K562 (cell line): ENCODE measurements at regions of chr11 and their contacts with region 1.

Region 1: GRCh38 chr11:74929431-74930363 is 19.2 kb downstream of the XRRA1 start:
- DNase-seq: peak; percentile 45 to 92 (median 54)
- ATAC-seq: peak; percentile 98
- H3K4me3 ChIP-seq: no peak overlapping the region
- H3K27ac ChIP-seq: no peak overlapping the region
- H3K4me1 ChIP-seq: no peaks in the 10 kb centered on the region; a peak in 1 of 5 replicates
- H3K27me3 ChIP-seq: no peaks in the 10 kb centered on the region
- CTCF ChIP-seq: peak; percentile 82 to 92 (median 88)
- EP300 ChIP-seq: no peak
- POLR2A ChIP-seq: no peak
- RAD21 ChIP-seq: peak; percentile 91 to 93

Region 2: DNA sequence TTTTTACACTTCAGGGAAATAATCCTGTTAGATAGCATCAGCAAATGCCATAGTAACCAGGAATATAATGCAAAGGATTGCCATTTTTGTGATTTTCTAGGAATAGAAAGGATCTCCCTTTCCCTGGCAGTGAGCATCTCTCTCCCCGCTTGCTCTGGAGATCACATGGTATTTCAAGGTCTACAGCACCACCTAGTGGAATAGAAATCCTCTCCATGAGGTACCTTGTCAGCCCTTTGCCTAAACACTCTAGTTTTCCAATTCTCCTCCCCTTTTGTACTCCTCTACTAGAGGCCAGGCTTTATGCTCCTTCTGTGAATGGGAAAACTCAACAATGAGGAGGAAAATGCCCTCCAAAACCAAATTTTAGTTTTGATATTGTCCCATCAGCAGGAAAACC is 59.2 kb before region 1 on chr11:
- CTCF ChIA-PET with region 1: no interaction called
- POLR2A ChIA-PET with region 1: no interaction called
- in situ Hi-C with region 1: no loop called
- intact Hi-C with region 1: no loop called
- DNase-seq: peak; percentile 31 to 59 (median 46)
- ATAC-seq: peak; percentile 82
- H3K4me3 ChIP-seq: no peak overlapping the region
- H3K27ac ChIP-seq: no peak overlapping the region
- H3K4me1 ChIP-seq: no peaks in the 10 kb centered on the region
- H3K27me3 ChIP-seq: no peaks in the 10 kb centered on the region
- CTCF ChIP-seq: peak; percentile 39 to 54 (median 47); a peak in 4 of 6 replicates
- EP300 ChIP-seq: no peak
- POLR2A ChIP-seq: no peak
- RAD21 ChIP-seq: peak in 1 of 2 experiments; percentile 54; a peak in 2 of 4 replicates

Region 3: GRCh38 chr11:75004215-75004614 is 74.5 kb after region 1 on chr11:
- CTCF ChIA-PET with region 1: no interaction called
- POLR2A ChIA-PET with region 1: no interaction called
- in situ Hi-C with region 1: no loop called
- intact Hi-C with region 1: no loop called
- DNase-seq: no peak
- ATAC-seq: no peak
- H3K4me3 ChIP-seq: no peak overlapping the region
- H3K27ac ChIP-seq: no peak overlapping the region
- H3K4me1 ChIP-seq: no peaks in the 10 kb centered on the region
- H3K27me3 ChIP-seq: no peaks in the 10 kb centered on the region
- CTCF ChIP-seq: no peak
- EP300 ChIP-seq: no peak
- POLR2A ChIP-seq: no peak
- RAD21 ChIP-seq: no peak

Region 4: DNA sequence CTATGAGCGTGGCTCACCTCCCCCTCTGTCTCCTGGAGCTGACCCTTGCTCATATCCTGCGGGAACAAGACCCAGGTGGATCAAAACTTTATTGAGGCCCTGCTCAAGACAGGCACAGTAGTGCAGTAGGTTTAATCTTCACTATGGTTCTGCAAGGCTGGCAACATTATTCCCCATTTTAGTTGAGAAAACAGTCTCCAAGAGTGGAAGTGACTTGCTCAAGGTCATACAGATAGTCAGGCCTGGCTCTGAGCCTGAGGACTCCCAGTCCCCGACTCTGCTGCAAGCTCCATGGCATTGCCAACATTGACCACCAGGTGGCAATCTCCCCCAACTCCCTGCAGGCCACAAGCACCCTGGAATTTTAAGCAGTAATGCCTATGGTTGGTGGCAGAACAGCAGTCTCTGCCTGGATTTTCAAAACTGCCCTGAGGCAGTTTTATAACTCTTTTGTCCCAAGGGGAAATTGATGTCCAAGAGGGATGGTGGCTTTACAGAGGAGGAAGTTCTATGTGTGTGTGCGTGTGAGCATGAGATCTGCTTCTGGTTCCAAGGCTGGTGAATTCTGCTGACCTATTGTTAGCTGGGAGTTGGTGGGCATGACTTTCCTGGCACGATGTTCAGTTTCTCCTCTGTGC is 93.2 kb after region 1 on chr11:
- CTCF ChIA-PET with region 1: interaction called, 7 read pairs
- POLR2A ChIA-PET with region 1: no interaction called
- in situ Hi-C with region 1: no loop called
- intact Hi-C with region 1: loop called (anchors 2 kb)
- DNase-seq: peak; percentile 85 to 92 (median 89)
- ATAC-seq: peak; percentile 99
- H3K4me3 ChIP-seq: no peak overlapping the region
- H3K27ac ChIP-seq: peak overlapping the region; percentile 13; the same call in 1 of the 3 replicates
- H3K4me1 ChIP-seq: peaks cover 6 to 18% of the 10 kb centered on the region in 2 experiments; a peak in 4 of 5 replicates
- H3K27me3 ChIP-seq: no peaks in the 10 kb centered on the region
- CTCF ChIP-seq: peak; percentile 97 to 99 (median 99)
- EP300 ChIP-seq: peak; percentile 46
- POLR2A ChIP-seq: no peak
- RAD21 ChIP-seq: peak; percentile 98 to 99

Region 5: DNA sequence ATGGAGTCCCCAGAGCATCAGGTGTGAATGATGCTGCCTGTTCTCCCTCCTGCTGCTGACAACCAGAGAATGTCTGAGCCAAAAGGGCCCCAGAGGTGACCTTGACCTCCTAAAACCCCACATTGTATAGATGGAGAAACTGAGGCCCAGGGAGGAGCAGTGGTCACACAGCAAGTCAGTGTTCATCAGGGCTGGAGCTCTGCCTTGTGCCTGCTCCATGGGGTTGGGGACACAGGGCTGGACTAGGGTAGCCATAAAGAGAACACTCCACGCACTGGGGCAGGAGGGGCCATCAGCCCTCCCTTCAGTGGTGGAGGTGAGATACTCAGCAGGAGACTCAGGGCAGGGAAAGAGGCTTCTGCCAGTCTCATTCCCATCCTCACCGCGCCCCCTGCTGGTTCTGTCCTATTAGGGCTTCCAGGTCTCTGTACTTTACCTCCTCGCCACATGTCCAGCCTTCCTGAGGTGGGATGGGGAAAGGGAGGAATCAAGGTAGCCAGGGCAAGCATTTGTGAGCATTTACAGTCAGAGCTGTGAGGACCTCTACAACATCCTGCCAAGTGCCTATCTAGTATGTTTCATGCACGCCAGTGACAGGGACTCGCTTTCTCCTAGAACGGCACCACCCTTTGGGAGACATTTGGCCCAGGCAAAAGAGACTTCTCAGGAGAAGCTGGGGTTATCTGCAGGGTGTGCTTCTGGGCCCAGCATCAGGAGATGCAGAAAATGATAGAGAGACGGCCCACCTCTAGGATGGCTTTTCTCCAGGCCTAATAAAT is 102.3 kb after region 1 on chr11:
- CTCF ChIA-PET with region 1: interaction called, 6 read pairs
- POLR2A ChIA-PET with region 1: interaction called, 3 read pairs
- in situ Hi-C with region 1: no loop called
- intact Hi-C with region 1: loop called (anchors 2 kb)
- DNase-seq: peak; percentile 76 to 91 (median 80)
- ATAC-seq: peak; percentile 82
- H3K4me3 ChIP-seq: no peak overlapping the region
- H3K27ac ChIP-seq: peak overlapping the region; percentile 75
- H3K4me1 ChIP-seq: peaks cover 29 to 51% of the 10 kb centered on the region in 2 experiments
- H3K27me3 ChIP-seq: no peaks in the 10 kb centered on the region
- CTCF ChIP-seq: peak; percentile 79 to 87 (median 80)
- EP300 ChIP-seq: no peak
- POLR2A ChIP-seq: no peak
- RAD21 ChIP-seq: peak in 1 of 2 experiments; percentile 83; a peak in 3 of 4 replicates

Region 6: GRCh38 chr11:75142714-75143419 is 213.2 kb after region 1 on chr11:
- CTCF ChIA-PET with region 1: no interaction called
- POLR2A ChIA-PET with region 1: interaction called, 3 read pairs
- in situ Hi-C with region 1: no loop called
- intact Hi-C with region 1: loop called (anchors 5 kb)
- DNase-seq: peak; percentile 84 to 91 (median 88)
- ATAC-seq: peak; percentile 86
- H3K4me3 ChIP-seq: no peak overlapping the region
- H3K27ac ChIP-seq: peak overlapping the region; percentile 33; the same call in 1 of the 3 replicates
- H3K4me1 ChIP-seq: peaks cover 22 to 32% of the 10 kb centered on the region in 2 experiments
- H3K27me3 ChIP-seq: no peaks in the 10 kb centered on the region
- CTCF ChIP-seq: 0 out of 6 replicates have a peak, but pooled peaks of 1 of the 3 experiments have one; percentile 2
- EP300 ChIP-seq: 0 out of 2 replicates have a peak, but pooled peaks have one; percentile 23
- POLR2A ChIP-seq: no peak
- RAD21 ChIP-seq: no peak

Region 7: DNA sequence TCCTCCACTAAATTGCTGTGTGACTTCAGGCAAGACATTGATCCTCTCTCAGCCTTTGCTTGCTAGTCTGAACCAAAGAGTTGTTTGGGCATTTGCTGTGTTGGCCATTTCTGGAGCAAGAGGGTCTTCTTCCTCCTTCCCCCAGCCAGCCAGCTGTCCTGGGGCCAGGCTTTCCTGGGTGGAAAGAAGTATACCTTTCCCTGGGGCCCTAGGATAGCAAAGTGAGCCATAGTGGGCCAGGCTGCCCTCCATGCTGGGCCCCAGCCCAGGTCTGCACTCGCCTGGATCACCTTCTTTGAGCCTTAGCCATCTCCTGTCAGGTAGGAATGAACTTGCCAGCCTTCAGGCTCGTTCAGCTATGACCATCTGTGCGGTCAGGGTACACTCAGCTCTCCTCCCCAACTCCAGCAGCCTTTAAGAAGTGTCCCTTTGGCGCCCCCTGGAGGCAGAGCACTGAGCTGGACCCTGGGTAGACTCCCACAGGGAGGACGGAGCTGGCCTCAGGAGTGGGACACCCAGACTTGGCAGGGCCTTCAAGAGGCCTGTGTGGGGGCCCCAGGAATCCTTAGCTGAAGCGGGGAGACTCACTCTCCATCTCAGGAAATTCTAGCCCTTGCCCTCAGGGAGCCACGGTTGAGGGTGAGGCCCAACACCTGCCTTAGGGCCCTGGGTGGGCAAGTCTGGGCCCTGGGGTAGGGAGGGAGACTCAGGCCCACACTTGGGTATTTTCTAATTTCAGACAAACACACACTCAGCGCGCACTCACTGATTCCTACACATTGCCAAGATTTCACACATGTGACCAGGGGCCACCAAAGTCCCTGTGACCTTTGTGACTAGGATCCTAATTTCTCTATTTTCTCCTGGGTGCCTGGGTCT is 275.2 kb after region 1 on chr11:
- CTCF ChIA-PET with region 1: interaction called, 5 read pairs
- POLR2A ChIA-PET with region 1: no interaction called
- in situ Hi-C with region 1: no loop called
- intact Hi-C with region 1: loop called (anchors 1 kb)
- DNase-seq: peak; percentile 87 to 92 (median 90)
- ATAC-seq: peak; percentile 99
- H3K4me3 ChIP-seq: no peak overlapping the region
- H3K27ac ChIP-seq: no peak overlapping the region
- H3K4me1 ChIP-seq: peaks cover 6 to 10% of the 10 kb centered on the region in 2 experiments
- H3K27me3 ChIP-seq: no peaks in the 10 kb centered on the region; a peak in 1 of 5 replicates
- CTCF ChIP-seq: peak; percentile 94 to 96 (median 94)
- EP300 ChIP-seq: no peak
- POLR2A ChIP-seq: no peak
- RAD21 ChIP-seq: peak; percentile 92 to 94